ENCODE measurements at regions of chr1 and their contacts with region 1.

Region 1: GRCh38 chr1:175154629-175155472 is 37.7 kb downstream of the KIAA0040 start:
- DNase-seq: peak; percentile 72 to 85
- H3K4me3 ChIP-seq: no peak overlapping the region
- H3K27ac ChIP-seq: no peak overlapping the region
- H3K4me1 ChIP-seq: peaks cover 0 to 6% of the 10 kb centered on the region in 2 donors
- H3K27me3 ChIP-seq: no peaks in the 10 kb centered on the region
- CTCF ChIP-seq: peak; percentile 71 to 89 (median 78)
- POLR2A ChIP-seq: no peak

Region 2: GRCh38 chr1:175089136-175089718 is 65.6 kb before region 1 on chr1:
- intact Hi-C with region 1: no loop called
- DNase-seq: no peak
- H3K4me3 ChIP-seq: no peak overlapping the region
- H3K27ac ChIP-seq: no peak overlapping the region
- H3K4me1 ChIP-seq: no peaks in the 10 kb centered on the region
- H3K27me3 ChIP-seq: no peaks in the 10 kb centered on the region
- CTCF ChIP-seq: no peak
- POLR2A ChIP-seq: no peak

Region 3: GRCh38 chr1:175221666-175222175 is 66.9 kb after region 1 on chr1:
- intact Hi-C with region 1: loop called (anchors 5 kb)
- DNase-seq: peak; percentile 66 to 90
- H3K4me3 ChIP-seq: no peak overlapping the region
- H3K27ac ChIP-seq: no peak overlapping the region
- H3K4me1 ChIP-seq: peaks cover 0 to 5% of the 10 kb centered on the region in 2 donors
- H3K27me3 ChIP-seq: no peaks in the 10 kb centered on the region
- CTCF ChIP-seq: peak in 4 of 6 experiments; percentile 43 to 56 (median 46)
- POLR2A ChIP-seq: no peak

Region 4: GRCh38 chr1:175319418-175320230 is 164.8 kb after region 1 on chr1:
- intact Hi-C with region 1: loop called (anchors 2 kb)
- DNase-seq: peak; percentile 69 to 81
- H3K4me3 ChIP-seq: no peak overlapping the region
- H3K27ac ChIP-seq: no peak overlapping the region
- H3K4me1 ChIP-seq: peaks cover 0 to 7% of the 10 kb centered on the region in 2 donors
- H3K27me3 ChIP-seq: no peaks in the 10 kb centered on the region
- CTCF ChIP-seq: peak in 5 of 6 experiments; percentile 62 to 91 (median 82)
- POLR2A ChIP-seq: no peak

Region 5: DNA sequence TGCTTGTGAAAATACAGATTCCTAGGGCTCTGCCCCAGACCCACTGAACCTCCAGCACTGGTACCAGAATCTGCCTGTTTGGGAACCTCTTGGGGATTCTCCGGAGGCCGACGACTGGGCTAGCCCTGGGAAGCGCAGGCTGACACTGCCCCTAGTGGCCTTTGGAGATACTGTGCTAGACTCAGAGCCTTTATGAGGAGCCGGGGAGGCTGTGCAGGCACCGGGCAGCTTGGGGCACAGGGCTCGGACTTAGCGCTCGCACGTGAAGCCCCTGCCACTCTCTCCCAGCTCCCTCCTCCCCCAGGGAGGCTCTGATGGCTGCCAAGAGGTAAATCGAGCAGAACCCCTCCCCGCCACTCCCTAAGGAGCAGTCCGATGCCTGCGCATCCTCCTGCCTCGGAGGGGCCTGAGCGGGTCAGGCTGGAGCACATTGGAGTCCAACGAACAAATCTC is 733.2 kb after region 1 on chr1:
- intact Hi-C with region 1: loop called (anchors 5 kb)
- DNase-seq: peak; percentile 43
- H3K4me3 ChIP-seq: no peak overlapping the region
- H3K27ac ChIP-seq: no peak overlapping the region
- H3K4me1 ChIP-seq: no peaks in the 10 kb centered on the region
- H3K27me3 ChIP-seq: no peaks in the 10 kb centered on the region
- CTCF ChIP-seq: peak in 5 of 6 experiments; percentile 15 to 78 (median 43)
- POLR2A ChIP-seq: no peak

Measured in thyroid gland (tissue), 4 donors.